Activated CD4-positive, alpha-beta T cell treated with anti-CD3 and anti-CD28 coated beads for 36 hours (primary cell): ENCODE measurements at regions of chr10 and their contacts with region 1.

Region 1: DNA sequence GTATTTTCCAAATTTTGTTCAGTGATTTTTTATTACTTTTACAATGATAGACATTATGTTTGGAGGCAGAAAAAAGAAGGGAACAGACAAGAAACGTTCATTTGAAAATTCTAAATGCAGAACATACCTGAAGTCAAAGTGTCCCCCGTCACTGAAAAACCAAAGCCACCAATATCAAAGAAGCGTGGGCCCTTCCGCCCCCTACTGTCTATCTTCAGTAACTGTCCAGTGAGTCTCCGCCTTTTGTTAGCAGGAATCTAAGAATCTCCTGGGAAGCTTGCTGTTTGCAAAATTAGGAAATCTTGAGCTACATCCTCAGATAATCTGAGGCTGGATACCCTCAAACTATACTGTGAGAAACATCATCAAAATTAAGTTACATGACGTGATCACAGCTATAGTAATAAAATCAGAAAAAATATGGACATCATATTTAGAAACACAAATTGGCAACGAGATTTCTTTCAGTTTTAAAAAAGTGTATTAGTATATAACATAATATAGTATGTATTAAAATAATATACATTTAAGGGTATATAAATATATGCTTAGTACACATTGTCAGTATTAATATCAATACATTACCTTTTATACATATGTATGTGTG is 169.3 kb upstream of the AKR1E2 start:
- DNase-seq: peak; percentile 65
- ATAC-seq: no peak
- H3K4me3 Mint-ChIP-seq: no peak overlapping the region
- H3K27ac Mint-ChIP-seq: no peak overlapping the region
- H3K4me1 Mint-ChIP-seq: peaks cover 21% of the 10 kb centered on the region
- H3K27me3 Mint-ChIP-seq: peaks cover 9% of the 10 kb centered on the region

Region 2: DNA sequence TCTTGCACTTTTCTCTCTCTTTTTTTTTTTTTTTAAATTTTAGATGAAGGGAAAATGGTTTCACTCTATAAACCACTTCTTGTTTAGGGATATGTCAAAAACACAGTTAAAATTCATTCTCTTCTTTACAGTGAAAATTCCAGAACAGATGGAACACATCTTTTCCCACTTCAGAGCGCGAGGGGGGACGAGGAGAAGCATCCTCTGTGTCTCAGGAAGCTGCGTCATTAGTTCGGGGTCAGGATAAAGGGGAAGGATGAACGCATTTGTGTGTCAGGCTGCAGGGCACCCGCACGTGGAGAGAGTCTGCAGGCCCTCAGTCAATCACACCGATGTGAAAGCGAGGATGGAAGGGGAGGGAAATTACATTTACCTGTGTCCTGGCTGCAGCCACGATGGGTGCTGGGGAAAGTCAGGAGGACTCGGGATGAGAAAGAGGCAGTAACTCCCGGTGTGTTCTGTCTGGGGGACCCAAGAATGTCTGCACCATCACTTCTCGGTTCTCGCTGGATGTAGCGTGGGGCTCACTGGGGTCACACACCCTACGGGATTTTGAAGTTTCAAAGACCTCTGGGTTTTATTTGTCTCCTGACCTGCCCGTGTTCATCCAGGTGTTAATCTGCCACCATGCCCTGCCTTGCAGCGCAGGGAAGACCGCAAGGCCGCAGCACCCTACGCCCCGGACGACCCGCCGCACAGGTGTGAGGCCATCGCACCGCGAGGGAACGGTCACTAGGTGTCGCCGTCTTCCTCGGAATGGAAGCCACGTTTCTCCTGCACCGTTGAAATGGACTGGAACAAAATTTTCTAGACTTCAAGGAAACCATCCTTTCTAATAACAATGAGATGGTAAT is 1417.4 kb before region 1 on chr10:
- CTCF ChIA-PET with region 1: interaction called, 5 read pairs
- POLR2A ChIA-PET with region 1: no interaction called
- intact Hi-C with region 1: loop called (anchors 1 kb)
- DNase-seq: peak; percentile 85
- ATAC-seq: peak; percentile 93
- H3K4me3 Mint-ChIP-seq: no peak overlapping the region
- H3K27ac Mint-ChIP-seq: no peak overlapping the region
- H3K4me1 Mint-ChIP-seq: peaks cover 2% of the 10 kb centered on the region
- H3K27me3 Mint-ChIP-seq: peaks cover 23% of the 10 kb centered on the region

Region 3: GRCh38 chr10:3811291-3811870 is 845.3 kb before region 1 on chr10:
- CTCF ChIA-PET with region 1: no interaction called
- POLR2A ChIA-PET with region 1: no interaction called
- intact Hi-C with region 1: loop called (anchors 1 kb)
- DNase-seq: peak; percentile 78
- ATAC-seq: peak; percentile 62
- H3K4me3 Mint-ChIP-seq: peak overlapping the region; percentile 42
- H3K27ac Mint-ChIP-seq: no peak overlapping the region
- H3K4me1 Mint-ChIP-seq: peaks cover 80% of the 10 kb centered on the region
- H3K27me3 Mint-ChIP-seq: no peaks in the 10 kb centered on the region

Region 4: DNA sequence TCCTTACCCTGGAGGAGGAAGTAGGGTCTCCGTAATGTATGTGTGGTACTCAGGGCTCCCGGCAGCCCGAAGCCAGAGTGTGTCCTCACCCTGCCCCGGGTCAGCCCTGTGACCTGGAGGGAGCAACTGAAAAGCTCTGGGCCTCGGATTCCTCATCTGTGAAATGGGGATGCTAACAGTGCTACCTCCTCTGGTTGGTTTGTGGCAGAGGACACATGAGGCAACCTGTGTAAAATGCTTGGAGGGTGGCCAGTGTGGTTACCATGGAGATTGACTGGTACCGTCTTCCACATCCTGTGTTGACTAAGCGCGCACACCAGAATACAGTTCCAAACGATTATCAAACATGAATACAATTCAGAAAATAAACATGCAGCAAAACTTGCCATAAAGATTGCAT is 707.8 kb before region 1 on chr10:
- CTCF ChIA-PET with region 1: no interaction called
- POLR2A ChIA-PET with region 1: no interaction called
- intact Hi-C with region 1: loop called in 1 of 2 experiments (anchors 5 kb)
- DNase-seq: peak; percentile 85
- ATAC-seq: peak; percentile 91
- H3K4me3 Mint-ChIP-seq: peak overlapping the region; percentile 50
- H3K27ac Mint-ChIP-seq: peak overlapping the region; percentile 81
- H3K4me1 Mint-ChIP-seq: peaks cover 42% of the 10 kb centered on the region
- H3K27me3 Mint-ChIP-seq: no peaks in the 10 kb centered on the region

Region 5: GRCh38 chr10:4344511-4344994 is 312.1 kb before region 1 on chr10:
- CTCF ChIA-PET with region 1: no interaction called
- POLR2A ChIA-PET with region 1: no interaction called
- intact Hi-C with region 1: loop called in 1 of 2 experiments (anchors 5 kb)
- DNase-seq: peak; percentile 64
- ATAC-seq: peak; percentile 95
- H3K4me3 Mint-ChIP-seq: no peak overlapping the region
- H3K27ac Mint-ChIP-seq: no peak overlapping the region
- H3K4me1 Mint-ChIP-seq: peaks cover 24% of the 10 kb centered on the region
- H3K27me3 Mint-ChIP-seq: no peaks in the 10 kb centered on the region

Region 6: GRCh38 chr10:4399556-4399955 is 257.1 kb before region 1 on chr10:
- CTCF ChIA-PET with region 1: no interaction called
- POLR2A ChIA-PET with region 1: no interaction called
- intact Hi-C with region 1: no loop called
- DNase-seq: no peak
- ATAC-seq: no peak
- H3K4me3 Mint-ChIP-seq: no peak overlapping the region
- H3K27ac Mint-ChIP-seq: no peak overlapping the region
- H3K4me1 Mint-ChIP-seq: no peaks in the 10 kb centered on the region
- H3K27me3 Mint-ChIP-seq: no peaks in the 10 kb centered on the region

Region 7: DNA sequence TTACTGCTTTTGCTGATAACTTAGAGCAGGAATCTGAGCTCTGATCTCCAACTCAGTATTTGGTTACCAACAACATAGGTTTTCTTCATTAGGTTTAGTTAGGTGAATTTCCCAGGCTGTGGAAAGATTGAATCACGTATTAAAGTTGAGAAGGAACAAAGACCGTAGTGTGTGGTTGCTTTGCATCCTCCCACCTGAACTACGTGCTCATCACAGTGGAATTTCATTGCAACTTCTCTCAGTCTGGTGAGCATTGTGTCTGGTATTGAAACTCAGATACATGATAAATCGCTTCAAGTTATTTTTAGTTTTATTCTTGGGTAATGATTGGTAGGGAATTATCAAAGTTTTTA is 29.9 kb after region 1 on chr10:
- CTCF ChIA-PET with region 1: interaction called, 3 read pairs
- POLR2A ChIA-PET with region 1: no interaction called
- intact Hi-C with region 1: loop called in 1 of 2 experiments (anchors 2 kb)
- DNase-seq: peak; percentile 46
- ATAC-seq: peak; percentile 92
- H3K4me3 Mint-ChIP-seq: no peak overlapping the region
- H3K27ac Mint-ChIP-seq: peak overlapping the region; percentile 64
- H3K4me1 Mint-ChIP-seq: peaks cover 31% of the 10 kb centered on the region
- H3K27me3 Mint-ChIP-seq: no peaks in the 10 kb centered on the region